ENCODE measurements at regions of chr4 and their contacts with region 1.

Region 1: DNA sequence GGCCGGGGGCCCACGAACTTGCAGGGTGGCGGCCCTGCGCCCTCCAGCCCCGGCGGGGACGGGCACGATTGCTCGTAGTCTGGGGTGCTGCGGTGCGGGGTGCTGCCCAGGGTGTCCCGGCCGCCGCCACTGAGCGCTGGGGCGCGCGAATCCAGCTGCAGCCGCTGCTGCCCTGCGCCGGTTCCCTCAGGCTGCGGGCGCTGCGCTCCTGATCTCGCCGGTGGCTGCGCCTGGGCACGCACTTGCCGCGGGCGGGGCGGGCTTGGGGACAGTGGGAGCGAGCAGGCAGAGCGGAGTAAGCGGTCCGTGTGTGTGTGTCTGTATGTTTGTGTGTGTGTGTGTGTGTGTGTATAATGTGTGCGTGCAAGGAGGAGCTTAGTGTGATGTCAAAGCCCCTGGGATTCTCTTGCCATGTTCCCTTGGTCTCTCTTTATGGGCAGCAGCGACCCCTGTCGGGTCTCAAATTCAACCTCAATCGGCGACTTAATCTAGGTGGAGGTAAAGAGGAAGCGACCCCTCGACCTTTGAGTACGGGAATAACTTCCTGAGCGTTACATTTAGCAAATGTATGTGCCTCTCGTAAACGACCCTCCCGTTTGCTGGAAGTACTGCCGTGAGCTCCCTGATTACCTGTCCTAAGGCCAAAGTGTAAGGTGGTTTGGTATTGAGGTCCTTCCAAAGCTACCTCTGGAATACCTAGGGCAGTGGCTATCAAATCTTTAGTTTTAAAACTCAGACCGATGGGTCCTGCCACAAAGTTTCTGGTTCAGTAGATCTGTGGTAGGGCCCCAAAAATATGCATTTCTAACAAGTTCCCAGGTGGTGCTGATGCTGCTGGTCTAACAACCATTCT is at the start of gene RNF150:
- DNase-seq: peak; percentile 62 to 70
- H3K4me3 ChIP-seq: peak within 1 kb of the TSS; percentile 68 to 95 (median 79)
- H3K27ac ChIP-seq: peak within 1 kb of the TSS; percentile 66 to 79
- H3K4me1 ChIP-seq: no peaks in the 10 kb centered on the region
- H3K27me3 ChIP-seq: no peaks in the 10 kb centered on the region
- CTCF ChIP-seq: peak in 2 of 3 donors; percentile 74 to 79
- POLR2A ChIP-seq: no peak
- total RNA-seq, gene RNF150: 5.6 to 19.7 (median 14.8) TPM

Region 2: DNA sequence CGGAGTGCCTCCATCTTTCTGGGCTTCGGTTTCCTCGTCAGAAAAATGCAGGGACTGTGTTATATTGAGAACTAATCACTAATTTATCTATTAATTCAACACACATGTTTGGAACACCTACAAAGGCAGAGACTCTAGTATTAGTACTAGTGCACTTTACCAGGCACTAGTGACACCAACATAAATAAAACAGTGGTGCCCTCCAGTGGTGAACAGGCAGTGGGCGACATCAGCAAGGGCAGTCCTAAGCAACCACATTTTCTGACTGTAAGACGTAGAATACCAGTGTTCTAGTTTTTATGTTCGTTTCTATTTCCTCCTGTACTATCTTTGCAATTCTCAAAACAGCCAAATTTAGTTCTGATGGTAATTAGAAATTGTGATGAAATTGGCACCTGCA is 495.5 kb before region 1 on chr4:
- intact Hi-C with region 1: loop called (anchors 10 kb)
- DNase-seq: no peak
- H3K4me3 ChIP-seq: no peak overlapping the region
- H3K27ac ChIP-seq: no peak overlapping the region
- H3K4me1 ChIP-seq: no peaks in the 10 kb centered on the region
- H3K27me3 ChIP-seq: no peaks in the 10 kb centered on the region
- CTCF ChIP-seq: no peak
- POLR2A ChIP-seq: no peak

Region 3: GRCh38 chr4:141810712-141811375 is 677.5 kb after region 1 on chr4:
- intact Hi-C with region 1: no loop called
- DNase-seq: no peak
- H3K4me3 ChIP-seq: no peak overlapping the region
- H3K27ac ChIP-seq: no peak overlapping the region
- H3K4me1 ChIP-seq: no peaks in the 10 kb centered on the region
- H3K27me3 ChIP-seq: no peaks in the 10 kb centered on the region
- CTCF ChIP-seq: no peak
- POLR2A ChIP-seq: no peak